AG04449 (cell line): ENCODE measurements at regions of chr16 and their contacts with region 1.

Region 1: GRCh38 chr16:67159593-67160406 is at the starts of genes FBXL8 and TRADD:
- DNase-seq: no peak
- H3K4me3 ChIP-seq: peak within 1 kb of the TSS; percentile 93
- CTCF ChIP-seq: peak; percentile 34

Region 2: DNA sequence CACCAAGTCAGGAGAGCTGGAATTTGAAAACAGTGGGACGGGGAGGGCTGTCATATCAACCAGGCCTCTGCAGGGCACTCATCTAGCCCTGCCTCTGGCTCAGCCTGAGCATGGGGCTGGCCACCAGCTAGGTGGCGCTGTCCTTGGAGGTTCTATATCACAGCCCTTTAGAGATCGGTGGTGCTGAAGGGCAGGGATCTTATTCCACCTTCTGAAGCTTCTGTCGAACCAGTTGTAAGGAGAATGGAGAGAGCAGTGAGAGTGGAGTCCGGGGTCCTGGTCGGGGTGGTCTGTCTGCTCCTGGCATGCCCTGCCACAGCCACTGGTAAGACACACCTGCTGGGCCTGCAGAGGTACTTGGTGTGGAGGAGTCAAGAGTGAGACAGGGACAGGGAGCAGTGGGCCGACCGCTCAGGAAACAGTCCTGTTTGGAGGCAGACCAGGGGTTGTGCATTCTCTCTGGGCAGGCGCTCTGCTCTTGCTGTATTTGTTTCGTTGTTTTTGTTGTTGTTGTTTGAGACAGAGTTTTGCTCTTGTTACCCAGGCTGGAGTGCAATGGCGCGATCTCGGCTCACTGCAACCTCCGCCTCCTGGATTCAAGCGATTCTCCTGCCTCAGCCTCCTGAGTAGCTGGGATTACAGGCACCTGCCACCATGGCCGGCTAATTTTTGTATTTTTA is 198.6 kb before region 1 on chr16 and contains the start of gene CES3:
- CTCF ChIA-PET with region 1: interaction called, 57 read pairs
- POLR2A ChIA-PET with region 1: no interaction called
- DNase-seq: no peak
- H3K4me3 ChIP-seq: no peak within 1 kb of the TSS
- CTCF ChIP-seq: peak; percentile 84

Region 3: DNA sequence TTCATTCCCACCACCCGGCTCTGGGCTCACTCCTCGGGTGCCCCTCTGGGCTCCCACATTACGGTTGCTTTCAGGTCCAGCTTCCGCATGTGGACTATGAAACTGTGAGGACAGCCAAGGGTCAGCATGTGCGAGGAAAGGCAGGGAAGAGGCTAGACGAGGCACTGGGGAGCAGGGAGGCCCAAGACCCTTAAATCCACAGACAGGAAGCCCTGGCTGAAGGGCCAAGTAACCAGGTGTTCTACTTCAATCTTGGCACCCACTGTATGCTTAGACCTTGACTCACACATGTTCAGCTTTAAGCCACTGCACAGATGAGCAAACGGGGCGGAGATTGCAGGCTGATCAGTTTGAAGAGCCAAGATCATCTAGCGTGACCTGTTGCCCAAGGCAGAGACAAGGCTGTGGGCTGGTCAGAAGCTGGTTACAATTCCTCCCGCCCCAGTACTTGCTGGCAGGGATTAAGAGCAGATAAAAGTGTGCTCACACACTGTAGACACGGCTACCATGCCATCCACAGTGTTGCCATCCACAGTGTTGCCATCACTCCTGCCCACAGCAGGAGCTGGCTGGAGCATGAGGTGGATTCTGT is 171.5 kb before region 1 on chr16 and contains the start of gene CES4A:
- CTCF ChIA-PET with region 1: interaction called, 11 read pairs
- POLR2A ChIA-PET with region 1: no interaction called
- DNase-seq: no peak
- H3K4me3 ChIP-seq: no peak within 1 kb of the TSS
- CTCF ChIP-seq: no peak

Region 4: DNA sequence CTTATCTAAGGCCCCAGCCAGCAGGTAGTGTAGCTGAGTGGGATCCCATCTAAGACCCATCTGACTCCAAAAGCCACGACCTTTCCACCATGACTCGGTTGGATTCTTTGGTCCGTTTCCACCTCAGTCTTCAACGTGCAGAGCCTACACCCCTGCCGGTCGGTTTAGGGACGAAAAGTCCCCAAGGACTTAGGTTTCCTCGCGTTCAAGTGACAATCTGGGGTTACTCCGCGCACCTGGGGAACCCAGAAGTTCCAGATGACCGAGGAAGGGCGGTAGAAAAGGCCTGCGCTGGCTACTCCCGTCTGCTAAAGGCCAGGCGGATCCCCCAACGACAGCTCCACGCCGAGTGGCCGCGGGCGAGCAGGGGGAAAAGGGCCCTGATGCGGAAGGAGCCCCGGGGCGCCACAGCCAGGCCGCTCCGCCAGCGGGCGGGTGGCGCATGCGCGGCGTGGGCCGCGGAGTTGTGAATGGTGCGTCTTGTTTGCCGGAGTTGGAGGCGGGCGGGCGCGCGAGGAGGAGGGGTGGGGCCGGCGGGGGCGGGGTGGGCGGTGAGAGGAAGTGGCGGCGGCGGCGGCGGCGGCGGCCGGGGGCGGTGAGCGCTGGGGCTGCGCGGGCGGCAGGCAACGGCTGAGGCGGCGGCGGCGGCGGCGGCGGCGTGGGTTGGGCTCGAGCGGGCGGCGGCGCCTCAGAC is 131.1 kb before region 1 on chr16 and contains the start of gene CBFB:
- CTCF ChIA-PET with region 1: interaction called, 224 read pairs
- POLR2A ChIA-PET with region 1: no interaction called
- DNase-seq: peak; percentile 19
- H3K4me3 ChIP-seq: peak within 1 kb of the TSS; percentile 78
- CTCF ChIP-seq: no peak

Region 5: GRCh38 chr16:67129422-67129821 is 30.4 kb before region 1 on chr16:
- CTCF ChIA-PET with region 1: interaction called, 22 read pairs
- POLR2A ChIA-PET with region 1: no interaction called
- DNase-seq: no peak
- H3K4me3 ChIP-seq: no peak overlapping the region
- CTCF ChIP-seq: no peak

Region 6: GRCh38 chr16:67183627-67184328 is 24.0 kb after region 1 on chr16 and contains the start of gene MATCAP1:
- CTCF ChIA-PET with region 1: interaction called, 50 read pairs
- POLR2A ChIA-PET with region 1: interaction called, 8 read pairs
- DNase-seq: peak; percentile 82
- H3K4me3 ChIP-seq: peak within 1 kb of the TSS; percentile 74
- CTCF ChIP-seq: no peak